K562 (cell line): ENCODE measurements at regions of chrX and their contacts with region 1.

Region 1: DNA sequence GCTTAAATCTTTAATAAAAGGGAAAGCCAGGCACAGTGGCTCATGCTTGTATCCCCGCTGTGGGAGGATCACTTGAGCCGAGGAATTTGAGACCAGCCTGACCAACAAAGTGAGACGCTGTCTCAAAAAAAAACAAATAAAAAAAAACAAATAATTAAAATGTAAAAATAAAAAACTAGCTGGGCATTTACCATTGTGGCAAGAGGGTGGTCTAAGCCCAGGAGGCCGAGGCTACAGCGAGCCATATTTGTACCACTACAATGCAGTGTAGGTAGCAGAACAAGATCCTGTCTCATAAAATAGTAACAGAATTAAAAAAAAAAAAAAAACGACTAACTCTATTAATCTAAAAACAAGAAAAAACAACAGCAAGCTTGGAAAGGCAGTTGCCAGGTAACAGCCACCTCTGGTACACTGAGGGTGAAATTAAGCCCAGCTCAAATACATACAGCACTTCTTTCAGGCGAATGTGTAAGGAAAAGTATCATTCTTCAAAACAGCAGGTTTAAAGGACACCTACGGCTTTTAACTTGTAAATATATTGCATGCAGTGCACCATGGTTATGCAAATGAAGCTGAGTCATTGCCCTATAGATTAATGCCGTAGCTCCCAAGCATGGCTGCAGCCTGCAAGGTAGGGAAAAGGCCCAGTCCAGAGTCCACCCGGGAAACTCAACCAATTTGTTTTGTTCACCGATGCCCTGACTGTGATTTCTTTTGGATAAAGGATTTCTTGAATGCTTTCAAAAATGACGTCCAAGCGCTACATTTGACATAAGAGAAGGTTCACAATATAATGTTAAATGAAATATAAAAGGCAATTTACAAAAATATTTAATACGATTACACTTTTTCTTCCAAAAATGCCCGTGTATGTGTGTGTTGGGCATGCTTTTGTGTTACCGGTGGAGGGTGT is 14.5 kb upstream of the TXLNG start:
- DNase-seq: peak; percentile 56 to 82 (median 66)
- ATAC-seq: peak; percentile 96
- H3K4me3 ChIP-seq: no peak overlapping the region
- H3K27ac ChIP-seq: peak overlapping the region; percentile 99
- H3K4me1 ChIP-seq: peaks cover 0 to 3% of the 10 kb centered on the region in 2 experiments; a peak in 3 of 5 replicates
- H3K27me3 ChIP-seq: no peaks in the 10 kb centered on the region
- CTCF ChIP-seq: no peak
- EP300 ChIP-seq: no peak; the same call in 1 of the 2 replicates
- POLR2A ChIP-seq: peak; percentile 100
- RAD21 ChIP-seq: no peak

Region 2: DNA sequence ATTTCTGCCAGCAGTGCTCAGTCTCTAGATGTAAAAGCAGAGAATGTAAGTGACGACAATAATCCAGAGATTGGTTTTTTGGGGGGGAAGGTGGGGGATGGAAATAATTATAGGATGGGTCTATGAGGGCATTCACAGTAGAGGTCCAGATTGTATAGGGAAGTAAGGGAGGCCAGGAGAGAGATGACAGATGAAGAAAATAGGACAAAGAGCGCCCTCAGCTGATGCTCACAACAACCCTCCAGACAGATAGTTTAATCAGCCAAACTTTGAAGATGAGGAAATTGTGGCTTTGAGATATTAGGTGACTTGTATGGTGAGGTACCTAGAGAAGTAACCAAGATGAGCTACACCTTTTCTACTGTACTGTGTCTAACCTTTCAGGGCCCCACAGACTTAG is 466.6 kb before region 1 on chrX:
- CTCF ChIA-PET with region 1: no interaction called
- POLR2A ChIA-PET with region 1: no interaction called
- in situ Hi-C with region 1: no loop called
- intact Hi-C with region 1: no loop called
- DNase-seq: peak in 2 of 4 experiments; percentile 2
- ATAC-seq: no peak
- H3K4me3 ChIP-seq: no peak overlapping the region
- H3K27ac ChIP-seq: no peak overlapping the region
- H3K4me1 ChIP-seq: no peaks in the 10 kb centered on the region
- H3K27me3 ChIP-seq: no peaks in the 10 kb centered on the region
- CTCF ChIP-seq: peak in 1 of 3 experiments; percentile 41; a peak in 2 of 6 replicates
- EP300 ChIP-seq: no peak
- POLR2A ChIP-seq: no peak
- RAD21 ChIP-seq: peak; percentile 19 to 54; a peak in 3 of 4 replicates

Region 3: DNA sequence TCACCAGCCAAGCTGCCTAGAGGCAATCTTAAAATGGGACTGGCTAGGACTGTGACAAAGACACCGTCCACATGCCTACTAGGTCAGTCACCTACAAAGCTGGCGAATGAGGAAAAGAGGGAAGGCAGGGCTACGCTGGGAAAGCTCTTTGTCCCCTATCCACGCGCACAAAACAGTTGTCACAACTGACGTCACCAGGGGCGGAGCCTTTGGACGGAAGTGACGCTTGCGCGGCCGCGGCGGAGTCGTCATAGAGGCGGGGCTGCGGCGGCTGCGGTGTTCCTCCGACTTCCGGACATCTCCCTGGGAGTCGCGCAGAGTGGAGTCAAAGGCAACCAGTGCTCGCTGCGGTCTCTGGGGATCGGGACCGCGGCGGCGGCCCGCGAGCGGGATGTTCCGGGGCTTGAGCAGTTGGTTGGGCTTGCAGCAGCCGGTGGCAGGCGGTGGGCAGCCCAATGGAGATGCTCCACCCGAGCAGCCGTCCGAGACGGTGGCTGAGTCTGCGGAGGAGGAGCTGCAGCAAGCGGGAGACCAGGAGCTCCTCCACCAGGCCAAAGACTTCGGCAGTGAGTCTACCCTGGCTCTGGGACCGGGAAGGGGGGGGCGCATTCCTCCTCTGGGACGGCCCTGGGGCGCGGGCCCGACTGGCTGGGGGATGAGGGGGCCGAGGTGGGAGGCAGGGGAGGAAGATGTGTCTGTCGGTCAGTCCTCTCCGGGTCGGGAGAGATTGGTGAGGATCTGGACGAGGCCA is 52.2 kb before region 1 on chrX and contains the start of gene SYAP1:
- CTCF ChIA-PET with region 1: no interaction called
- POLR2A ChIA-PET with region 1: interaction called, 18 read pairs
- in situ Hi-C with region 1: no loop called
- intact Hi-C with region 1: loop called (anchors 2 kb)
- DNase-seq: peak; percentile 78 to 96 (median 82)
- ATAC-seq: peak; percentile 93
- H3K4me3 ChIP-seq: peak within 1 kb of the TSS; percentile 82
- H3K27ac ChIP-seq: peak within 1 kb of the TSS; percentile 100
- H3K4me1 ChIP-seq: peaks cover 7 to 11% of the 10 kb centered on the region in 2 experiments; a peak in 3 of 5 replicates
- H3K27me3 ChIP-seq: no peaks in the 10 kb centered on the region
- CTCF ChIP-seq: peak in 1 of 3 experiments; percentile 17; a peak in 1 of 6 replicates
- EP300 ChIP-seq: no peak
- POLR2A ChIP-seq: peak; percentile 95
- RAD21 ChIP-seq: no peak
- polyA plus RNA-seq, gene SYAP1: 5.7 to 6.8 TPM

Region 4: DNA sequence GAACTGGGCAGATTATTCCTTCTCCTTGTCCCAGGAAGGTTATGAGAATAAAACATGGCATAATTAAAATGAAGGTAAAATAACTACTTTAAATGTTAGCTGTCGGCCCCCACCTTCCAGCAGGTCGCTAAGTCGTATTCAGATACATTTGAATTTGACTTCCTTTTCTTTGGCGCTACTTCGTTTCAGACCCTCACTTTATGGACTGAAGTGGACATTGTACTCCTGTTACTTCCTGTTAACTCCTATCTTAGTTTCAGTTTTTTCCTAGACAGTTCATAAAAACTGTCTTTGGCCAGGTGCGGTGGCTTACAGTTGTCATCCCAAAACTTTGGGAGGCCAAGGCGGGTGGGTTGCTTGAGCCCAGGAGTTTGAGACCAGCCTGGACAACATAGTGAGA is 46.7 kb before region 1 on chrX:
- CTCF ChIA-PET with region 1: no interaction called
- POLR2A ChIA-PET with region 1: interaction called, 18 read pairs
- in situ Hi-C with region 1: no loop called
- intact Hi-C with region 1: no loop called
- DNase-seq: no peak
- ATAC-seq: no peak
- H3K4me3 ChIP-seq: no peak overlapping the region
- H3K27ac ChIP-seq: no peak overlapping the region
- H3K4me1 ChIP-seq: peaks cover 7 to 11% of the 10 kb centered on the region in 2 experiments; a peak in 3 of 5 replicates
- H3K27me3 ChIP-seq: no peaks in the 10 kb centered on the region
- CTCF ChIP-seq: no peak
- EP300 ChIP-seq: no peak
- POLR2A ChIP-seq: no peak
- RAD21 ChIP-seq: no peak

Region 5: GRCh38 chrX:16756724-16757123 is 15.0 kb before region 1 on chrX:
- CTCF ChIA-PET with region 1: no interaction called
- POLR2A ChIA-PET with region 1: interaction called, 19 read pairs
- in situ Hi-C with region 1: no loop called
- intact Hi-C with region 1: no loop called
- DNase-seq: no peak
- ATAC-seq: no peak
- H3K4me3 ChIP-seq: no peak overlapping the region
- H3K27ac ChIP-seq: no peak overlapping the region
- H3K4me1 ChIP-seq: no peaks in the 10 kb centered on the region
- H3K27me3 ChIP-seq: no peaks in the 10 kb centered on the region
- CTCF ChIP-seq: no peak
- EP300 ChIP-seq: no peak
- POLR2A ChIP-seq: no peak
- RAD21 ChIP-seq: no peak

Region 6: GRCh38 chrX:16786139-16786790 is 14.5 kb after region 1 on chrX and contains the start of gene TXLNG:
- CTCF ChIA-PET with region 1: no interaction called
- POLR2A ChIA-PET with region 1: interaction called, 35 read pairs
- in situ Hi-C with region 1: no loop called
- intact Hi-C with region 1: no loop called
- DNase-seq: peak; percentile 90 to 99 (median 94)
- ATAC-seq: peak; percentile 98
- H3K4me3 ChIP-seq: peak within 1 kb of the TSS; percentile 80
- H3K27ac ChIP-seq: peak within 1 kb of the TSS; percentile 90
- H3K4me1 ChIP-seq: peaks cover 7 to 10% of the 10 kb centered on the region in 2 experiments; a peak in 3 of 5 replicates
- H3K27me3 ChIP-seq: no peaks in the 10 kb centered on the region
- CTCF ChIP-seq: no peak
- EP300 ChIP-seq: no peak
- POLR2A ChIP-seq: peak; percentile 92
- RAD21 ChIP-seq: no peak
- polyA plus RNA-seq, gene TXLNG: 13.1 to 21.4 TPM